Posterior vena cava (tissue), 2 donors: ENCODE measurements at regions of chr3 and their contacts with region 1.

Region 1: GRCh38 chr3:97647441-97647982 is 117.0 kb upstream of the ARL6 start:
- DNase-seq: no peak

Region 2: DNA sequence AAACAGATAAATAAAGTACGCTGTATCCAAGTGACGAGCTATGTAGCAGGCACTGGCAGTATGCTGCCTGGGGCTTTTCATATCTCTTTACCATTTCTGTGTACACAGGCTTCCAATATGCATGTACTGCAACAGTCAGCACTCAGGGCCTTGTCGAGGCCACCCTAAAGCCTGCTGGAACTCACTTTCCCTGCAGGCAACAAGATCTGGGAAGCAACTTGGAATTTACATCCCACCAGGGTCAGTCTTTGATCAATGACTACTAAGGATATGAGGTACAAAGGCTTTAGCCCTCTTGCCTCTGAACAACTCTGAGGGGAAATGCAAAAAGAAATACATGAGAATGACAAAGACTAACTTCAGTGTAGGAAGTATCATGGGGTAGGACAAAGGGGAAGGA is 15.2 kb after region 1 on chr3:
- intact Hi-C with region 1: loop called in 1 of 2 experiments (anchors 1 kb)
- DNase-seq: no peak